OCI-LY7 (cell line): ENCODE measurements at regions of chr11 and their contacts with region 1.

Region 1: GRCh38 chr11:111926505-111927391 is 8.0 kb downstream of the C11orf52 start:
- DNase-seq: peak; percentile 97
- H3K4me3 ChIP-seq: peak overlapping the region; percentile 67
- H3K27ac ChIP-seq: peak overlapping the region; percentile 79
- H3K4me1 ChIP-seq: peaks cover 14% of the 10 kb centered on the region
- CTCF ChIP-seq: 0 out of 2 replicates have a peak, but pooled peaks have one; percentile 13

Region 2: DNA sequence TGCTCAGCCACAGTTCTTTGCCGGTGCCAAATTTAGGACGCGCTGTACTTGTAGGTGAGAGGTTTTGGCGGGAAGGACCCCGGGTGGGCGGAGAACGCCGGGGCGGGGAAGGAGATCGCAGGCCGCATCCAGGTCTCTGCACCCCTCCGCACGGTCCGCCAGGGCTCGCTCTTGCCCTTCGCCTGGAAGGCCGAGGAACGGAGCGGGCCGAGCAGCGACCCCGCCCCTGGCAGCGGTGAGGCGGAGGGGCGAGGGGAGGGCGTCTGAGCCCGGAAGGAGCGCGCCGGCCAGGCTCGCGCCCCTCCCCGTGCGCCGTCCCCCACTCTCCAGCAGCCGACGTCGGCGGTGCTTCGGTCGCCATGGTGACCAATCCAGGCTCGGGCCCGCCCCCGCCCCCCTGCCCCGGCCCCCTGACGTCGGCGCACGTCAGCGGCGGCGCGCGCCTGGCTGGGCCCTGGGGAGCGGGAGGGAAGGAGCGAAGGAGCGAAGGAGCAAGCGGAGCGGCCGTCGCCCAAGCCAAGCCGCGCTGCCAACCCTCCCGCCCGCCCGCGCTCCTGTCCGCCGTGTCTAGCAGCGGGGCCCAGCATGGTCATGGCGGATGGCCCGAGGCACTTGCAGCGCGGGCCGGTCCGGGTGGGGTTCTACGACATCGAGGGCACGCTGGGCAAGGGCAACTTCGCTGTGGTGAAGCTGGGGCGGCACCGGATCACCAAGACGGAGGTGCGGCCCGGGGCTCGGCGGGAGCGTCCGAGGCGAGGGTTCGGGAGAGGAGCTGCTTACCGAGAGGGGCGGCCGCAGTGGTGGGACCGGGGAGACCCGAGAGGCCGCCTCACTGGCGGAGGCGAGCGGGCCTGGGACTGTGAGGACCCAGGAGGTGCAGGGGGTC is 324.5 kb before region 1 on chr11 and contains the start of gene SIK2:
- CTCF ChIA-PET with region 1: no interaction called
- POLR2A ChIA-PET with region 1: interaction called, 5 read pairs
- intact Hi-C with region 1: loop called (anchors 5 kb)
- DNase-seq: peak; percentile 97
- H3K4me3 ChIP-seq: peak within 1 kb of the TSS; percentile 96
- H3K27ac ChIP-seq: peak within 1 kb of the TSS; percentile 72
- H3K4me1 ChIP-seq: peaks cover 30% of the 10 kb centered on the region
- CTCF ChIP-seq: peak; percentile 80
- total RNA-seq, gene SIK2: 8.5 and 9.8 TPM in 2 replicates

Region 3: GRCh38 chr11:111642542-111642941 is 284.2 kb before region 1 on chr11:
- CTCF ChIA-PET with region 1: no interaction called
- POLR2A ChIA-PET with region 1: no interaction called
- intact Hi-C with region 1: no loop called
- DNase-seq: no peak
- H3K4me3 ChIP-seq: no peak overlapping the region
- H3K27ac ChIP-seq: no peak overlapping the region
- H3K4me1 ChIP-seq: no peaks in the 10 kb centered on the region
- CTCF ChIP-seq: no peak

Region 4: GRCh38 chr11:111829185-111829968 is 97.4 kb before region 1 on chr11:
- CTCF ChIA-PET with region 1: no interaction called
- POLR2A ChIA-PET with region 1: no interaction called
- intact Hi-C with region 1: no loop called
- DNase-seq: no peak
- H3K4me3 ChIP-seq: no peak overlapping the region
- H3K27ac ChIP-seq: no peak overlapping the region
- H3K4me1 ChIP-seq: no peaks in the 10 kb centered on the region
- CTCF ChIP-seq: no peak

Region 5: GRCh38 chr11:111878849-111879636 is 47.7 kb before region 1 on chr11 and contains the starts of genes CFAP68 and FDXACB1:
- CTCF ChIA-PET with region 1: no interaction called
- POLR2A ChIA-PET with region 1: interaction called, 21 read pairs
- intact Hi-C with region 1: loop called (anchors 1 kb)
- DNase-seq: peak; percentile 98
- H3K4me3 ChIP-seq: peak within 1 kb of the TSS; percentile 75
- H3K27ac ChIP-seq: peak within 1 kb of the TSS; percentile 72
- H3K4me1 ChIP-seq: peaks cover 12% of the 10 kb centered on the region
- CTCF ChIP-seq: peak; percentile 86
- total RNA-seq, gene CFAP68: 14.8 and 17.3 TPM in 2 replicates
- total RNA-seq, gene FDXACB1: 4.2 and 6.2 TPM in 2 replicates

Region 6: DNA sequence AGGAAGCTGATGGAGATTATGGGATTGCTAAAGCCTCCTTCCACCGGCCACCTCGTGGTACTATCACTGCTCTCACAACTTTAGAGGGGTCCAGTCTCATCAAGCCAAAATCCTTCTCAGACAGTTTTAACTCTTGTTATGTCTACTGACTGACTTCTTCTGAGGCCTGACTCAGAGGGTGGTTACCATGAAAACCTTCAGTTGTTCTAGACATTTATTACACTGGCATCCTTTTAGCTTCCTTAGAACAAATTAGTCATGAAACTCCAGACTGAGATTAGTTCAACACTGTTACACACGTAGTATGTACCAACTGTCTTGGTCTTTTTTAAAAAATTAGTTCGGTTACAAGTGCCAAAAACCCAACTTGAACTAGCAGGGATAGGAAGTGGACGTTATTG is 17.9 kb after region 1 on chr11:
- CTCF ChIA-PET with region 1: interaction called, 12 read pairs
- POLR2A ChIA-PET with region 1: interaction called, 54 read pairs
- intact Hi-C with region 1: no loop called
- DNase-seq: no peak
- H3K4me3 ChIP-seq: no peak overlapping the region
- H3K27ac ChIP-seq: no peak overlapping the region
- H3K4me1 ChIP-seq: peaks cover 13% of the 10 kb centered on the region
- CTCF ChIP-seq: no peak

Region 7: DNA sequence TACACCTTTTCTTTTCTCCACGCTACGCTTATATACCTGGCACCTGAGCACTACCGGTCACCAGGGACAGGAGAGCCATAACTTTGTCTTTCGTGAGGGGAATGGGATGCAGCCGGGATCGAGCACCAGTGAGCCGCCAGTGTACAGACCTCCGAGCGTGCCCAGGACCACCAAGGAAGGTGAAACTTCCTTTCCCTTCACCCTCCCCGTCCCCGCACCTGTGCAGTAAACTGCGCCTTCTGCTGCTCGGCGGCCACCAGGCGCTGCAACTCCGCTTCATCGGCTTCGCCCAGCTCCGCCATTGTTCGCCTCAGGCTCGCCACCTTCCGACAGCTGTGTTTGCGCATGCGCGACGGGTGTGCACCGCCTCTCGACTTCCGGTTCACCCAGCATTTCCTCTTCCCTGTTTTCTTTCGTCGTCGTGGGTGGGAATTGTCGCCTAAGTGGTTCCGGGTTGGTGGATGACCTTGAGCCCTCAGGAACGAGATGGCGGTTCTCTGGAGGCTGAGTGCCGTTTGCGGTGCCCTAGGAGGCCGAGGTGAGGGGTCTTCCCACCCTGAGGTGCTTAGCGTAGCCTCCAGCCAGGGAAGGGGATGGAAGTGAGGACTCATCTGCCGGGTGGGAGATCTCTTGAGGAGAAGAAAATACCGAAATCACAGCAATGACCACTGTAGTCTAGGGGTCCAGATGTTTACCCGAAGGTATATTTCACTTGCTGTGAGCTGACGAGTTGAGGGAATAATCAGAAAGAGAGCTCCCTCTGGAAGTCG is 159.9 kb after region 1 on chr11 and contains the starts of genes SDHD and TIMM8B:
- CTCF ChIA-PET with region 1: no interaction called
- POLR2A ChIA-PET with region 1: interaction called, 11 read pairs
- intact Hi-C with region 1: no loop called
- DNase-seq: peak; percentile 98
- H3K4me3 ChIP-seq: peak within 1 kb of the TSS; percentile 89
- H3K27ac ChIP-seq: peak within 1 kb of the TSS; percentile 56
- H3K4me1 ChIP-seq: peaks cover 24% of the 10 kb centered on the region
- CTCF ChIP-seq: peak; percentile 33; the same call in 1 of the 2 replicates
- total RNA-seq, gene SDHD: 43.5 and 58.8 TPM in 2 replicates
- total RNA-seq, gene TIMM8B: 71.3 and 94.3 TPM in 2 replicates